ENCODE measurements at regions of chr17 and their contacts with region 1.

Region 1: DNA sequence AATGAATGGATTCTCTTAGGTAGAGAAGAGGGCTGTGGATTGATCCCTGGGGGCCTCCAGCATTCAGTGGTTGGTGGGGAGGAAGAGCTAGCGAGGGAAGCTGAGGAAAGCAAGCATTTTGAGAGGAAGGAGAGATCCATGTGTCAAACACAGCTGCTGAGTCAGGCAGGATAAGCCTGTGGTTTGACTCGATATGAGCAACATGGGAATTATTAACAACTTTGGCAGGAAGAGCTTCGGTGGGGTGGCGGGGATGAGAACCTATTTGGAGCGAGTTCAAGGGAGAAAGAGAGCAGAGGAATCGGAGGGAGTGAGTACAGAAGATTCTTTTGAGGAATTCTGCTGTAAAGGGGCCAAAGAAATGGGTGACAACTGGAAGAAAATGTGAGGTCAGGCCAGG is 59.5 kb upstream of the CDC42EP4 start:
- DNase-seq: no peak
- ATAC-seq: no peak
- H3K4me3 ChIP-seq: no peak overlapping the region
- H3K27ac ChIP-seq: no peak overlapping the region
- H3K4me1 ChIP-seq: no peaks in the 10 kb centered on the region
- H3K27me3 ChIP-seq: peaks cover 31% of the 10 kb centered on the region; the same call in 1 of the 2 replicates
- CTCF ChIP-seq: no peak
- POLR2A ChIP-seq: no peak
- RAD21 ChIP-seq: no peak

Region 2: DNA sequence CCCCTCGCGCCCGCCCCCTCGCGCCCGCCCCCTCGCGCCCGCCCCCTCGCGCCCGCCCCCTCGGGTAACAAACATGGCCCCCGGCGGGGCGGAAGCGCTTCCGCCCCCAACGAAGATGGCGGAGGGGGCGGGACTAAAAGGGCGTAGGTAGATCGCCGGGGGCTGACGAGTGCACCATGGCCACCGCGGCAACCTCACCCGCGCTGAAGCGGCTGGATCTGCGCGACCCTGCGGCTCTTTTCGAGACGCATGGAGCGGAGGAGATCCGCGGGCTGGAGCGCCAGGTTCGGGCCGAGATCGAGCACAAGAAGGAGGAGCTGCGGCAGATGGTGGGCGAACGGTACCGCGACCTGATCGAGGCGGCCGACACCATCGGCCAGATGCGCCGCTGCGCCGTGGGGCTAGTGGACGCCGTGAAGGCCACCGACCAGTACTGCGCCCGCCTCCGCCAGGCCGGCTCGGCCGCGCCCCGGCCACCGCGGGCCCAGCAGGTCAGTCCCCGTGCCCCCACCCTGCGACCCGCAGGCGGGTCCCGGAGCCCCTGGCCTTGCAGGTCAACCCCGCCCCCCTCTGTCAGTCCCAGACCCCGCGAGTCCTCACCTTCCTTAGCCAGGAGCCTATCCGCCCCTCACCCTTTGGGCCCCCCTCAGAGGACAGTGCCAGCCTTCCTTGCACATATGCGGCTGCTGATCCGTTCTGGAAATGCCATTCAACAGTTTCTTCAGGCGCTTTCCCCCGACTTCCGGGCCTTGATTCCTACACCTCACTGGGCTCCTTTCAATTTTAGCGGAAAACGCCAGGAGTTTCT is 178.2 kb before region 1 on chr17 and contains the start of gene COG1:
- CTCF ChIA-PET with region 1: interaction called, 17 read pairs
- POLR2A ChIA-PET with region 1: interaction called, 3 read pairs
- RAD21 ChIA-PET with region 1: interaction called, 3 to 4 read pairs
- intact Hi-C with region 1: loop called (anchors 1 kb)
- DNase-seq: peak; percentile 76
- ATAC-seq: peak; percentile 75
- H3K4me3 ChIP-seq: peak within 1 kb of the TSS; percentile 68 to 88
- H3K27ac ChIP-seq: peak within 1 kb of the TSS; percentile 98
- H3K4me1 ChIP-seq: peaks cover 0 to 35% of the 10 kb centered on the region in 2 experiments; a peak in 3 of 4 replicates
- H3K27me3 ChIP-seq: no peaks in the 10 kb centered on the region
- CTCF ChIP-seq: 0 out of 6 replicates have a peak, but pooled peaks of 1 of the 3 experiments have one; percentile 7
- POLR2A ChIP-seq: peak; percentile 7
- RAD21 ChIP-seq: no peak
- total RNA-seq, gene COG1: 44.6 TPM

Region 3: DNA sequence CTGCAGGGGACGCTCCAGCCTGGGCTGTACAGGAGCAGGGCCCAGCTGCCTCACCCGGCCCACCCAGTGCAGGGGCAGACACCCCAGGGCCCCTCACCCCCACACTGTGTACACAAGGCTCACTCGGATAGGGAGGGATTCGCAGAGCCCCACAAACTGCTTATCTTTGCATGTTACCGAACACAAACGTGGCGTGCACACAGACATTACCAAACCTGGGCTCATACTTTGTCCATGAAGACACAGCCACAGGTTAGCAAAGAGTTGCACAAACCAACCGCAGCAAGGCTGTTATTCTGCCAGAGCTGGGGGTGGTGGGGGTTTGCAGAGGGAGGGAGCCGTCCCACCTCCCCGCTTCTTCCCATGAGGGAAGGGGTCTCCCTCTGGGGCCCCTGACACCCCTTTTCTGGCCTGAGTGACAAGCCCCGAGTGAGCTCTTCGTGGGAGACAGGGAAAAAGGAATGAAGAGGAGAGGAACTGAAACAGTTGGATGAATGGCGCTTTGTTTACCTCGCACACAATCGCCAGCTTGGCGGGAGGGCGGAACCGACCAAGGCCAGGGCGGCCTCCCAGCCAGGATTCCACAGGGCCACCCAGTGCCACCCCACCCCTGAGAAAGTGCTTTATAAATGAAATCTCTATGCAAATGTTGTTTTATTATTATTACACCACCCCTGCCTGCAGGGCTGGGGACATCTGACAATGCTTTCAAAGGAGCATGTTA is 109.2 kb before region 1 on chr17:
- CTCF ChIA-PET with region 1: interaction called, 180 read pairs
- POLR2A ChIA-PET with region 1: no interaction called
- RAD21 ChIA-PET with region 1: interaction called, 4 to 5 read pairs
- intact Hi-C with region 1: no loop called
- DNase-seq: no peak
- ATAC-seq: peak; percentile 21; the same call in 1 of the 2 replicates
- H3K4me3 ChIP-seq: no peak overlapping the region
- H3K27ac ChIP-seq: no peak overlapping the region
- H3K4me1 ChIP-seq: no peaks in the 10 kb centered on the region
- H3K27me3 ChIP-seq: no peaks in the 10 kb centered on the region
- CTCF ChIP-seq: no peak
- POLR2A ChIP-seq: no peak
- RAD21 ChIP-seq: no peak

Region 4: GRCh38 chr17:73304971-73305812 is 66.1 kb before region 1 on chr17:
- CTCF ChIA-PET with region 1: interaction called, 25 read pairs
- POLR2A ChIA-PET with region 1: interaction called, 4 read pairs
- RAD21 ChIA-PET with region 1: interaction called, 4 read pairs
- intact Hi-C with region 1: no loop called
- DNase-seq: peak; percentile 55
- ATAC-seq: peak; percentile 50
- H3K4me3 ChIP-seq: peak overlapping the region; percentile 51 to 56
- H3K27ac ChIP-seq: peak overlapping the region; percentile 70
- H3K4me1 ChIP-seq: peaks cover 71 to 93% of the 10 kb centered on the region in 2 experiments
- H3K27me3 ChIP-seq: no peaks in the 10 kb centered on the region
- CTCF ChIP-seq: peak in 2 of 3 experiments; percentile 53; a peak in 4 of 6 replicates
- POLR2A ChIP-seq: no peak
- RAD21 ChIP-seq: no peak

Region 5: GRCh38 chr17:73359987-73360410 is 11.3 kb before region 1 on chr17:
- CTCF ChIA-PET with region 1: interaction called, 10 read pairs
- POLR2A ChIA-PET with region 1: no interaction called
- RAD21 ChIA-PET with region 1: interaction called in 1 of 2 experiments, 3 read pairs
- intact Hi-C with region 1: no loop called
- DNase-seq: peak; percentile 59
- ATAC-seq: peak; percentile 96
- H3K4me3 ChIP-seq: peak overlapping the region; percentile 1 to 36; a peak in 2 of 4 replicates
- H3K27ac ChIP-seq: peak overlapping the region; percentile 2; the same call in 1 of the 2 replicates
- H3K4me1 ChIP-seq: peaks cover 14 to 29% of the 10 kb centered on the region in 2 experiments
- H3K27me3 ChIP-seq: no peaks in the 10 kb centered on the region
- CTCF ChIP-seq: peak; percentile 47 to 54 (median 53); a peak in 4 of 6 replicates
- POLR2A ChIP-seq: no peak
- RAD21 ChIP-seq: peak; percentile 77

Region 6: DNA sequence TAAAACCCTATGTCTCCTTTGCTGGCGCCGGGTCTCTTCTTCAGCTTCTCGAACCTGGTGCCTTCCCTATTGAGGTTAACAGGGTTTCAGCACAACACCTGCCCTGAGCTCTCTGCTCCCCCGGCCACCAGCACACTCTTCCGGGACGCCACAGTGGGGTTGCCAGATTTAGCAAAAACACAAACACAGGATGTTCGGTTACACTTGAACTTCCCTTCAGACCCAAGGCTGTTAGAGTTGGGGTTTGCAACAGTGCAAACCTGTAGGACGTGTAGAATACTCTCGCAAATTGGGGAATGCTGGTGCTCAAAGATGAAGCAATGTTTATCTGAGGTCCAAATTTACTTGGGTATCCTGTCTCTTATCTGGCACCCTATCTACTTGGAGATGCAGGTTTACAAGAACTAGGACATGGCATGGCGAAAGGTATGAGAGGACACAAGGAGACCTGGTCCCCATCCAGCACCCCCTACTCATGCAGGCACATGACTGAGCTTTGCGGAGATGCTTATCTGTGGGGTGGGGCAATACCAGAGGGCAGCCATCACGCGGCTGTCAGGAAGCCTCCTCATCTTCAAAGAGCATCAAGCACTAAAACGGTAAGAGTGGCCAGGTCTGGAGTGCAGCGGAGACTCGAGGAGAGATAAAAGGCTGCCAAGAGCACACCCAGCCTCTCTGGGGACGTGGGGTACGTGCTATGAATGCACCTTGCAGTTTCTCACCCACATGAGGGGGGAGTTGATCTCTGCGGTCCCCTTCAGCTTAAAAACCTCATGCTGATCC is 220.2 kb after region 1 on chr17:
- CTCF ChIA-PET with region 1: no interaction called
- POLR2A ChIA-PET with region 1: no interaction called
- RAD21 ChIA-PET with region 1: no interaction called
- intact Hi-C with region 1: no loop called
- DNase-seq: no peak
- ATAC-seq: no peak
- H3K4me3 ChIP-seq: no peak overlapping the region
- H3K27ac ChIP-seq: no peak overlapping the region
- H3K4me1 ChIP-seq: peaks cover 2 to 10% of the 10 kb centered on the region in 2 experiments; a peak in 3 of 4 replicates
- H3K27me3 ChIP-seq: peaks cover 6% of the 10 kb centered on the region; the same call in 1 of the 2 replicates
- CTCF ChIP-seq: no peak
- POLR2A ChIP-seq: no peak
- RAD21 ChIP-seq: no peak

Measured in HCT116 (cell line).